ENCODE measurements at regions of chr2 and their contacts with region 1.

Region 1: DNA sequence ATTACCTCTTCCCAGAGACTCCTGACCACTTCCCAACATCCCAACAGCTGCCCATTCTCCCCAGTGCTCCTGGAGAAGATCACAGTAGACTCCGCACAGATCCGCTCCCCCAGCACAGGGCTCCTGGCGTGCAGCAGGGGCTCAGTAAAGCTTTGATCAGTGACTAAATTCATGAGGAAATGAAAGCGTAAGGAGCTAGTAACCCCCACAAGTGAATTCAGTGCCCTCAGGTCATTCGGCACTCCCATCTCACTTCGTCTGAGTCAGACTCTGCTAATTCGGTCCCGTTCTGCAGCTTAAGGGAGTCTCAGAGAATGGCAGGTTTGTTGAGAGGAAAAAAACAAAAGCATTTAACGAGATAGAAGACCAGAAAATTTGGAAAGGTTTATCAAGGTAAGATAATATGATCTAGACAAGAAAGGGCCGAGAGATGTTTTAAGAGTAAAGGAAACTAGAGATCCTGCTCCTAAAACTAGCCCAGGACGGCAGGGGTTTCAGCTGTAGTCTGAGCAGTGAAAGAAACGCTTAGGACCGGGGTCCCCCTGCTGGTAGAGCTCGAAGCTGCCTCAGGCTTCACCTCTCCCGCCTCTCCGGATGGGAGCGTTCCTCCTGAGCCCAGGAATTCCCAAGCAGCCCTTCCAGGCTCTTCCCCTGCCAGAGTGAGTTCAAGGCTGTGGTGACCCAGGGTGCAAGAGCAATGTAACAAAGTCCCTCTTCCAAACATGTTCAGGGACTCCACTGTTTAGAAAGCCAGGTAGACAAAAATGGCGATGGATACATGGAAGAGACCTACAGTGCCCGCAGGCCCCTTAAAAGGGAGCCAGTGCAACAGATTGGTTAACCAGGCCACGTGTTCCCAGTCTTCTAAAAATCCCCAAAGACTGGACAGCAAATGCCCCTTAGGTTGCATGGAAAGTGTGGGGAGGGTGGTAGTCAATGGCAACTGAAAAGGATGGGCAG is 127.3 kb downstream of the DNER start:
- DNase-seq: peak; percentile 93
- H3K4me3 ChIP-seq: peak overlapping the region; percentile 21 to 41 (median 33)
- H3K27ac ChIP-seq: peak overlapping the region; percentile 94
- H3K4me1 ChIP-seq: peaks cover 16% of the 10 kb centered on the region
- H3K27me3 ChIP-seq: no peaks in the 10 kb centered on the region
- CTCF ChIP-seq: peak; percentile 85 to 89

Region 2: GRCh38 chr2:228689053-228689452 is 898.0 kb before region 1 on chr2:
- CTCF ChIA-PET with region 1: no interaction called
- dilution Hi-C with region 1: no loop called
- in situ Hi-C with region 1: no loop called
- intact Hi-C with region 1: loop called (anchors 5 kb)
- DNase-seq: no peak
- H3K4me3 ChIP-seq: no peak overlapping the region
- H3K27ac ChIP-seq: no peak overlapping the region
- H3K4me1 ChIP-seq: no peaks in the 10 kb centered on the region
- H3K27me3 ChIP-seq: peaks cover 3% of the 10 kb centered on the region
- CTCF ChIP-seq: peak in 1 of 2 donors; percentile 36

Region 3: GRCh38 chr2:229273723-229274338 is 313.2 kb before region 1 on chr2:
- CTCF ChIA-PET with region 1: interaction called, 23 read pairs
- dilution Hi-C with region 1: no loop called
- in situ Hi-C with region 1: no loop called
- intact Hi-C with region 1: loop called (anchors 1 kb)
- DNase-seq: peak; percentile 72
- H3K4me3 ChIP-seq: peak overlapping the region; percentile 14 to 22 (median 21)
- H3K27ac ChIP-seq: no peak overlapping the region
- H3K4me1 ChIP-seq: peaks cover 13% of the 10 kb centered on the region
- H3K27me3 ChIP-seq: no peaks in the 10 kb centered on the region
- CTCF ChIP-seq: peak; percentile 79 to 85

Region 4: GRCh38 chr2:229431327-229431954 is 155.6 kb before region 1 on chr2:
- CTCF ChIA-PET with region 1: interaction called, 24 read pairs
- dilution Hi-C with region 1: no loop called
- in situ Hi-C with region 1: loop called in 1 of 2 experiments (anchors 5 kb)
- intact Hi-C with region 1: loop called (anchors 1 kb)
- DNase-seq: peak; percentile 56
- H3K4me3 ChIP-seq: no peak overlapping the region
- H3K27ac ChIP-seq: no peak overlapping the region
- H3K4me1 ChIP-seq: no peaks in the 10 kb centered on the region
- H3K27me3 ChIP-seq: no peaks in the 10 kb centered on the region
- CTCF ChIP-seq: peak; percentile 51 to 64

Region 5: GRCh38 chr2:229714736-229715541 is 127.9 kb after region 1 on chr2:
- CTCF ChIA-PET with region 1: no interaction called
- dilution Hi-C with region 1: no loop called
- in situ Hi-C with region 1: no loop called
- intact Hi-C with region 1: loop called (anchors 2 kb)
- DNase-seq: peak; percentile 56
- H3K4me3 ChIP-seq: peak overlapping the region; percentile 40 to 51 (median 45)
- H3K27ac ChIP-seq: no peak overlapping the region
- H3K4me1 ChIP-seq: peaks cover 20% of the 10 kb centered on the region
- H3K27me3 ChIP-seq: peaks cover 31% of the 10 kb centered on the region
- CTCF ChIP-seq: no peak